ENCODE measurements at regions of chr9 and their contacts with region 1.

Region 1: DNA sequence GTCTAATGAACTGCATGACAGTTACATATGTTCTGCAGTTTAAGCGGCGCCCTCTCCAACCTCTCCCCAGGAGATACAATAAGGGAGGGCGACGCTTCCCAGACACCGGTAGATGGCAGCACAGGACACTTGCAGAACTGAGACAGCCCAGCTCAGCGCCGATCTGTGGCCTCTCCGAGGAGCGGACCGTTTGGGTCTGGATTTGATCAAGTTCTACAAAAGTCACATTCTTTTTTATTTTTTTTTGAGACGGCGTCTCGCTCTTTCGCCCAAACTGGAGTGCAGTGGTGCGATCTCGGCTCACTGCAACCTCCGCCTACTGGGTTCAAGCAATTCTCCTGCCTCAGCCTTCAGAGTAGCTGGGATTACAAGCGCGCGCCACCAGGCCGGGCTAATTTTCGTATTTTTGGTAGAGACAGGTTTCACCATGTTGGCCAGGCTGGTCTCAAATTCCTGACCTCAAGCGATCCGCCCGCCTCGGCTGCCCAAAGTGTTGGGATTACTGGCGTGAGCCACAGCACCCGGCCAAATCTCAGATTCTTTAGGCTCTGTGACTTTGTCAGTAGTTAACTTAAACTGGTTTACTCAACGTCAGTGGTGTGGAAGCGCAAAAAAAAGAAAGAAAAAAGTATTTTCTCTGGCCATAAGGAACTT is 1.4 kb upstream of the ATOSB start:
- DNase-seq: peak; percentile 67 to 91 (median 87)
- ATAC-seq: peak; percentile 77
- H3K4me3 ChIP-seq: peak overlapping the region; percentile 82
- H3K4me3 Mint-ChIP-seq: peak overlapping the region; percentile 88 to 100 (median 93)
- H3K27ac ChIP-seq: peak overlapping the region; percentile 79
- H3K27ac Mint-ChIP-seq: peak overlapping the region; percentile 89 to 98 (median 94)
- H3K4me1 ChIP-seq: peaks cover 26 to 33% of the 10 kb centered on the region in 2 donors
- H3K4me1 Mint-ChIP-seq: peaks cover 27 to 43% (median 41%) of the 10 kb centered on the region in 7 donors
- H3K27me3 ChIP-seq: no peaks in the 10 kb centered on the region
- H3K27me3 Mint-ChIP-seq: peaks cover 0 to 6% (median 0%) of the 10 kb centered on the region in 5 donors

Region 2: DNA sequence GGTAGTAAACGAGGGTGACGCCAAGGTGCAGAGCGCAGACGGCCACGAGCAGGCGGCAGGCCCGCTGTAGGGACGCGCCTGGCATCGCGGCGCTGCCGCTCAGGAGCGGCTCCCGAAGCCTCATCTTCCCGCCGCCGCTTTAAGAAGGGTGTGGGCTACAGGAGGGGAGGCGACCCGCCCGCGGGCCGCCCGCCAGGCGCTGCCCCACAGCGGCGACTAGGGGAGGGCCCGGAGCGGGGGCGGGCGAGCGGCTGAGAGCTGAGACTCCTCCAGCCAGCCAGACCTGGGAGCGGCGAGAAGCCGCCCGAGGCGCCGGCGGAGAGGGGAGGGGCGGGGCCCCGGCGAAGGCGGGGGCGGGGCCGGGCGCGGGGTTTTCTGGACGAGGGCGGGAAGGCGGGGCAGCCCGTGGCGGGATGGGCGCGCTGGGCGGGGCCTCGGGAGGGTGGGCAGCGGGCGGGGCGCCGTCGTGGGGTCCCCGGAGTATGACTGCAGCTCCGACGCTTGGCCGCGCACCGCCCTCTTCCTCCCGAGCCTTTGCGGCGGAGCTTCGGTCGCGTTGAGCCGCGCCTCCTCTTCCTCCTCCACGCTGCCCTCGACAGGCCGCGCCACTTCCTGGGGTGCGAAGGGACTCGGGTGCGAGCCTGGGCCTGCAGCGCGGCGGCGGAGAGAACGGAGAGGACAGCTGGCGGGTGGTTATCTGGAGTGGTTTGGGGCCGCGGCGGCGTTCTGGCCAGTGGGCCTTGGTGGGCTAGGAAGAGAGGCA is 1949.8 kb before region 1 on chr9 and contains the start of gene B4GALT1:
- CTCF ChIA-PET with region 1: no interaction called
- POLR2A ChIA-PET with region 1: no interaction called
- intact Hi-C with region 1: loop called in 1 of 2 experiments (anchors 10 kb)
- DNase-seq: peak; percentile 81 to 97 (median 90)
- ATAC-seq: peak; percentile 86
- H3K4me3 ChIP-seq: peak within 1 kb of the TSS; percentile 68
- H3K4me3 Mint-ChIP-seq: peak within 1 kb of the TSS; percentile 87 to 97 (median 95)
- H3K27ac ChIP-seq: peak within 1 kb of the TSS; percentile 91
- H3K27ac Mint-ChIP-seq: peak within 1 kb of the TSS; percentile 91 to 100 (median 99)
- H3K4me1 ChIP-seq: peaks cover 43 to 45% of the 10 kb centered on the region in 2 donors
- H3K4me1 Mint-ChIP-seq: peaks cover 47 to 69% (median 64%) of the 10 kb centered on the region in 7 donors
- H3K27me3 ChIP-seq: no peaks in the 10 kb centered on the region
- H3K27me3 Mint-ChIP-seq: no peaks in the 10 kb centered on the region
- total RNA-seq, gene B4GALT1: 40.7 to 86.2 (median 45.6) TPM

Region 3: DNA sequence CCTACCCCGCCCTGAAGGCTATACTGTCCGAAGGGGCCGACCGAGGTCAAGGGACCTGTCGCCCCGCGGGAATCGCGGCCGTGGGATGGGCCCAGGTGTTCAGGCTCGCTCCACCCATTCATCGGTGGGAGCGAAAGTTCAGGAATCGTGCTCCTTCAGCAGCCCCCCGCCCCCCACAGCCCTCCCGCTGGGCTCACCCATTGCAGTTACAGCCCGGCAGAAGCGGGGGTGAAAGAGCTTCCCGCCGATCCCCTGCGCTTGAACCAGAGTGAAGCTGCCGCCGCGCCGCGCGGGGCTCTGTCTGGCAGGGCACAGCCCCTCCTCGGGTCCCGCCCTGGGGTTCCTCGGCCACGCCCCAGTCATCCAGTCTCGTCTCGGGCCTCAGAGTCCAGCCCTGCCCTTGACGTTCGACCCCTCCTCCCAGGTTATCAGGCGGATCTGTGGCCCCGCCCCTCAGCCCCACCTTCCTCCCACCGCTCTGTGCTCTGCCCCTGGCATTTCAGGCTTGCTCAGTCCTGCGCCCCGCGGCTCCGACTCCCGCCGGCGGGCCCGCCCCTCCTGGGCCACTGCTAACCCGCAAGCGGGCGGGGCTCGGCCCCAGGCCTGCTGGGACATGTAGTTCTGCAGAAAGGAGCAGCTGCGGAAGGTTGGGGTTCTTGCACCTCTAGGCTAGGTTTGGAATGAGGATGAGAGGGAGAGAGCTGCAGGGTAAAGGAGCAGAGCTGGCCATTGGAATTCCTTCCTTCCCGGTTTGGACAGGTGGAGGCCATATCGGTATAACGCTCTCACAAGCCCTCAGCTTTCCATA is 740.2 kb before region 1 on chr9 and contains the start of gene MYORG:
- CTCF ChIA-PET with region 1: interaction called, 3 read pairs
- POLR2A ChIA-PET with region 1: no interaction called
- intact Hi-C with region 1: loop called (anchors 2 to 5 kb)
- DNase-seq: peak; percentile 85 to 96 (median 93)
- ATAC-seq: peak; percentile 86
- H3K4me3 ChIP-seq: peak within 1 kb of the TSS; percentile 82
- H3K4me3 Mint-ChIP-seq: peak within 1 kb of the TSS; percentile 78 to 94 (median 91)
- H3K27ac ChIP-seq: peak within 1 kb of the TSS; percentile 57
- H3K27ac Mint-ChIP-seq: peak within 1 kb of the TSS; percentile 52 to 92 (median 81)
- H3K4me1 ChIP-seq: peaks cover 16 to 22% of the 10 kb centered on the region in 2 donors
- H3K4me1 Mint-ChIP-seq: peaks cover 27 to 49% (median 45%) of the 10 kb centered on the region in 7 donors
- H3K27me3 ChIP-seq: no peaks in the 10 kb centered on the region
- H3K27me3 Mint-ChIP-seq: peaks cover 0 to 5% (median 0%) of the 10 kb centered on the region in 5 donors
- total RNA-seq, gene MYORG: 0.60 to 1.9 (median 0.78) TPM

Region 4: DNA sequence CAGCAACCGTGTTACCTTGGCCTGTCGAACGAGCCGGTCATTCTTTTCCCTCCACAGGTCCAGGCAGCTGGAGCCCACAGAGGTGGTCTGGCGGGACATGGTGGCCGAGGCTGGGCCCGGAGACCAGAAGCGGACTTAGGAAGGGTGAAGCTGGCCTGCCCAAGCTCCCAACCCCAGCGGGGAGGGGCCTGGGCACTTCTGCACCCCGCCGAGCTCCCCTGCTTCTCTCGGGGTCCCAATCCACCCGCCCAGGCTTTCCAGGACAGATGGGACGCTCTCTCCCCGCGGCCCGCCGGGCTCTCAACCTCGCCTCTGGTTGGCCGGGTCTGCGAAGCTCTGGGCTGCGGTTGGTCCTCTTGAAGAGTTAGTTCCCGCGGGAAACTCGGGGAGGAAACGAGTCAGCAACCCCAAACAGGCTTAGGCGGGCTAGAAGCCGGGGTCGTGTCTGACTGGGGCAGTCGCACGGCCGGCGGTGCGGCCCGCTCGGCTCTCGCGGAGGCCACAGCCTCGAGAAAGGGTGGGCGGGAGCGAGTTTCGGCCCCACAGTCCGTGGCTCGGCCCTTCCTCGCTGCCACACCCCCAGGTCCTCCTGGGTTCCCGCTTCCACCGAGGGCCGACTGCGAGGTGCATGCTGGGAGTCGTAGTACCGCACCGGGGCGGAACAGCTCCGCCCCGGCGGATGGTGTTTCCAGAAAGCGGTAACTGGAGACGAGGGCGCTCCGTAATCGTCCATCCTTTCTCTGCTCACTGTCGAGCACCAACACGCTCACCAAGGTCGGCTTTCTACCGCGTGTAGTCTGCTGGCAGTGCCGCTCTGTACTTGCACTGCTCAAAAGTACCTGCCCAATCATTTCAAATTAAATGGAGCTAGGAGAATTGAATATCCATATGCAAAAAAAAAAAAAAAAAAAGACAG is 37.3 kb before region 1 on chr9 and contains the start of gene FANCG:
- CTCF ChIA-PET with region 1: interaction called, 5 read pairs
- POLR2A ChIA-PET with region 1: interaction called, 6 read pairs
- intact Hi-C with region 1: loop called in 1 of 2 experiments (anchors 1 kb)
- DNase-seq: peak; percentile 60 to 87 (median 73)
- ATAC-seq: peak; percentile 98
- H3K4me3 ChIP-seq: peak within 1 kb of the TSS; percentile 84
- H3K4me3 Mint-ChIP-seq: peak within 1 kb of the TSS; percentile 84 to 98 (median 94)
- H3K27ac ChIP-seq: peak within 1 kb of the TSS; percentile 74
- H3K27ac Mint-ChIP-seq: peak within 1 kb of the TSS; percentile 76 to 99 (median 91)
- H3K4me1 ChIP-seq: peaks cover 8 to 10% of the 10 kb centered on the region in 2 donors
- H3K4me1 Mint-ChIP-seq: peaks cover 13 to 38% (median 24%) of the 10 kb centered on the region in 7 donors
- H3K27me3 ChIP-seq: no peaks in the 10 kb centered on the region
- H3K27me3 Mint-ChIP-seq: no peaks in the 10 kb centered on the region
- total RNA-seq, gene FANCG: 19.6 to 84.9 (median 26.7) TPM

Region 5: DNA sequence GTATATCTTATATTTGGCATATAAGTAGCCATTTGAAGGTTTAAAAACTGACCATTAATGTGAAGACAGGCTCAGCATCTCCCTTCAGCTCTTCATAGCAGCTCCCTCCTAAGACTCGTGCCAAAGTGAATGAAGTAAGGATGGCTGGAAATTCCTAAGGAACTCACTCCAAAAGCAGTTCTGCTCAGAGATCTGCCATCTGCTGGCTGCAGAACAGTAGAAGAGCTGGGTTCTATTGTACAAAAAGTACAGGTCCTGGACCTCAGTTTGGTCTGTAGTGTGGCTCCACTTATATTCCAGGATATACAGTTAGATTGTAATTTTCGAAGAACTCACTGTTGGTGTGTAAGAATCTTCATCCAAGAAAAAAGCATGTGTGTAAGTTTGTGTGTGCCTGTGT is 268.0 kb after region 1 on chr9:
- CTCF ChIA-PET with region 1: interaction called, 3 read pairs
- POLR2A ChIA-PET with region 1: no interaction called
- intact Hi-C with region 1: loop called in 1 of 2 experiments (anchors 2 kb)
- DNase-seq: no peak
- ATAC-seq: no peak
- H3K4me3 ChIP-seq: no peak overlapping the region
- H3K4me3 Mint-ChIP-seq: no peak overlapping the region
- H3K27ac ChIP-seq: no peak overlapping the region
- H3K27ac Mint-ChIP-seq: no peak overlapping the region
- H3K4me1 ChIP-seq: no peaks in the 10 kb centered on the region
- H3K4me1 Mint-ChIP-seq: no peaks in the 10 kb centered on the region
- H3K27me3 ChIP-seq: no peaks in the 10 kb centered on the region
- H3K27me3 Mint-ChIP-seq: peaks cover 0 to 8% (median 0%) of the 10 kb centered on the region in 5 donors

Region 6: DNA sequence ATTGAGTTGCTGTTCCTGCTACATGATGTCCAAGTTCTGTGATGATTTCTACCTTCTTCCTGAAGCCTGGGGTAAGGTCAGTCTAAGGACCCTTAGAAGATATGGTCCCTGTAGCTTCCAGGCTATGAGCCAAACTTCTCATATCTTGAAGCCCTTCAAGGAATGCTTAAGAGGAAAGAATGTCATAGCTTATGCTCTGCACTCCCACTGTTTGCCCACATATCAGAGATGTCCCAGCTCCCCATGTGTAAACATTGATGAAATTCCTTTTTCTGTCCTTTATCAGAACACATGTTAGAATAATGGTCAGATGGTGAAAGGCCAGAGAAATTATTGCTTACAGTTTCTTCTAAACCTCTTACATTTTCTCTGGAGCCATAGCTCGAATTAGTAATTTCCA is 331.5 kb after region 1 on chr9:
- CTCF ChIA-PET with region 1: no interaction called
- POLR2A ChIA-PET with region 1: no interaction called
- intact Hi-C with region 1: no loop called
- DNase-seq: no peak
- ATAC-seq: no peak
- H3K4me3 ChIP-seq: no peak overlapping the region
- H3K4me3 Mint-ChIP-seq: no peak overlapping the region
- H3K27ac ChIP-seq: no peak overlapping the region
- H3K27ac Mint-ChIP-seq: no peak overlapping the region
- H3K4me1 ChIP-seq: no peaks in the 10 kb centered on the region
- H3K4me1 Mint-ChIP-seq: no peaks in the 10 kb centered on the region
- H3K27me3 ChIP-seq: peaks cover 0 to 3% of the 10 kb centered on the region in 2 donors
- H3K27me3 Mint-ChIP-seq: peaks cover 31 to 53% (median 39%) of the 10 kb centered on the region in 5 donors

Region 7: GRCh38 chr9:35646533-35647265 is 529.7 kb after region 1 on chr9:
- CTCF ChIA-PET with region 1: no interaction called
- POLR2A ChIA-PET with region 1: no interaction called
- intact Hi-C with region 1: loop called (anchors 2 to 5 kb)
- DNase-seq: peak; percentile 87 to 96 (median 93)
- ATAC-seq: peak; percentile 95
- H3K4me3 ChIP-seq: peak overlapping the region; percentile 90
- H3K4me3 Mint-ChIP-seq: peak overlapping the region; percentile 90 to 100 (median 96)
- H3K27ac ChIP-seq: peak overlapping the region; percentile 83
- H3K27ac Mint-ChIP-seq: peak overlapping the region; percentile 86 to 99 (median 96)
- H3K4me1 ChIP-seq: peaks cover 44 to 51% of the 10 kb centered on the region in 2 donors
- H3K4me1 Mint-ChIP-seq: peaks cover 40 to 70% (median 46%) of the 10 kb centered on the region in 7 donors
- H3K27me3 ChIP-seq: no peaks in the 10 kb centered on the region
- H3K27me3 Mint-ChIP-seq: no peaks in the 10 kb centered on the region

Region 8: GRCh38 chr9:36136272-36136893 is 1019.4 kb after region 1 on chr9 and contains the start of gene GLIPR2:
- CTCF ChIA-PET with region 1: no interaction called
- POLR2A ChIA-PET with region 1: no interaction called
- intact Hi-C with region 1: loop called in 1 of 2 experiments (anchors 10 kb)
- DNase-seq: peak; percentile 60 to 88 (median 69)
- ATAC-seq: peak; percentile 97
- H3K4me3 ChIP-seq: peak within 1 kb of the TSS; percentile 78
- H3K4me3 Mint-ChIP-seq: peak within 1 kb of the TSS; percentile 83 to 99 (median 93)
- H3K27ac ChIP-seq: peak within 1 kb of the TSS; percentile 74
- H3K27ac Mint-ChIP-seq: peak within 1 kb of the TSS; percentile 25 to 94 (median 87)
- H3K4me1 ChIP-seq: peaks cover 43 to 49% of the 10 kb centered on the region in 2 donors
- H3K4me1 Mint-ChIP-seq: peaks cover 43 to 52% (median 49%) of the 10 kb centered on the region in 7 donors
- H3K27me3 ChIP-seq: no peaks in the 10 kb centered on the region
- H3K27me3 Mint-ChIP-seq: peaks cover 0 to 39% (median 0%) of the 10 kb centered on the region in 5 donors
- total RNA-seq, gene GLIPR2: 7.7 to 74.7 (median 18.6) TPM